Lower leg skin (tissue), 4 donors: ENCODE measurements at regions of chr10 and their contacts with region 1.

Region 1: GRCh38 chr10:106515206-106515790 is 649.2 kb downstream of the SORCS1 start:
- DNase-seq: no peak
- H3K4me3 ChIP-seq: no peak overlapping the region
- CTCF ChIP-seq: no peak
- POLR2A ChIP-seq: no peak

Region 2: GRCh38 chr10:104850023-104850422 is 1665.3 kb before region 1 on chr10:
- intact Hi-C with region 1: loop called (anchors 5 kb)
- DNase-seq: no peak
- H3K4me3 ChIP-seq: no peak overlapping the region
- CTCF ChIP-seq: no peak
- POLR2A ChIP-seq: no peak

Region 3: GRCh38 chr10:105195831-105196230 is 1319.5 kb before region 1 on chr10:
- intact Hi-C with region 1: loop called (anchors 5 kb)
- DNase-seq: no peak
- H3K4me3 ChIP-seq: no peak overlapping the region
- CTCF ChIP-seq: no peak
- POLR2A ChIP-seq: no peak

Region 4: GRCh38 chr10:106577266-106577665 is 62.0 kb after region 1 on chr10:
- intact Hi-C with region 1: no loop called
- DNase-seq: no peak
- H3K4me3 ChIP-seq: no peak overlapping the region
- CTCF ChIP-seq: no peak
- POLR2A ChIP-seq: no peak